ENCODE measurements at regions of chr5 and their contacts with region 1.

Region 1: DNA sequence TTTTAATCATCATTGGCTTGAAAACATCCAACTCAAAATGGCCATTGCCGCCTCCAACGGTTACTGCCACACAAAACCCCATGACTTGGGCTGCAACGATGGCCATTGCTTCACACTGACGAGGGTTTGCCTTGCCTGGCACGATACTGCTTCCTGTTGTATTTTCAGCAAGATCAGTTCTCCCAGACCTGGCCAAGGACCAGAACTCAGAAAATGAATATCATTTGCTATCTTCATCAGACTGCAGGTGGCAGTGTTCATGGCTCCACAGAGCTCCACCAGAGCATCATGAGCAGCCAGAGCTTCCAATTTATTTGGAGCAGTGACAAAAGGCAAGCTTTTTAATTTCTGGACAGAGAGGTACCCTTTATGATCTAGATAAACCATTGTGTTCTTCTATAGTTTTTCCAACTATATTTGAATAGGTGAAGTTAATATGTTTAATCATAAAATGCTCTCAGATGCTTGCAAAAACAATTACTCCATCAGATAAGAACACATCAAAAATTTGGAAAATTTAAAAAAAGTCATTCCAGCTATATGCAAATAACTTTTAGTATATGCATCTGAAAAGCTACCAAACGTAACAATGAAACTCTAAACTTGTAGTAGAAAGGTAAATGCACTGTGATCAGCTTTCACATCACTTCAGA is 10.4 kb downstream of the AMACR start:
- DNase-seq: no peak
- H3K4me3 Mint-ChIP-seq: no peak overlapping the region
- H3K27ac Mint-ChIP-seq: no peak overlapping the region
- H3K4me1 Mint-ChIP-seq: peaks cover 29% of the 10 kb centered on the region
- H3K27me3 Mint-ChIP-seq: no peaks in the 10 kb centered on the region

Region 2: GRCh38 chr5:33509036-33509435 is 488.4 kb before region 1 on chr5:
- intact Hi-C with region 1: no loop called
- DNase-seq: no peak
- H3K4me3 Mint-ChIP-seq: no peak overlapping the region
- H3K27ac Mint-ChIP-seq: no peak overlapping the region
- H3K4me1 Mint-ChIP-seq: no peaks in the 10 kb centered on the region
- H3K27me3 Mint-ChIP-seq: peaks cover 1% of the 10 kb centered on the region

Region 3: GRCh38 chr5:34464830-34465229 is 467.4 kb after region 1 on chr5:
- intact Hi-C with region 1: loop called (anchors 1 kb)
- DNase-seq: no peak
- H3K4me3 Mint-ChIP-seq: no peak overlapping the region
- H3K27ac Mint-ChIP-seq: no peak overlapping the region
- H3K4me1 Mint-ChIP-seq: peaks cover 4% of the 10 kb centered on the region
- H3K27me3 Mint-ChIP-seq: peaks cover 4% of the 10 kb centered on the region

Region 4: DNA sequence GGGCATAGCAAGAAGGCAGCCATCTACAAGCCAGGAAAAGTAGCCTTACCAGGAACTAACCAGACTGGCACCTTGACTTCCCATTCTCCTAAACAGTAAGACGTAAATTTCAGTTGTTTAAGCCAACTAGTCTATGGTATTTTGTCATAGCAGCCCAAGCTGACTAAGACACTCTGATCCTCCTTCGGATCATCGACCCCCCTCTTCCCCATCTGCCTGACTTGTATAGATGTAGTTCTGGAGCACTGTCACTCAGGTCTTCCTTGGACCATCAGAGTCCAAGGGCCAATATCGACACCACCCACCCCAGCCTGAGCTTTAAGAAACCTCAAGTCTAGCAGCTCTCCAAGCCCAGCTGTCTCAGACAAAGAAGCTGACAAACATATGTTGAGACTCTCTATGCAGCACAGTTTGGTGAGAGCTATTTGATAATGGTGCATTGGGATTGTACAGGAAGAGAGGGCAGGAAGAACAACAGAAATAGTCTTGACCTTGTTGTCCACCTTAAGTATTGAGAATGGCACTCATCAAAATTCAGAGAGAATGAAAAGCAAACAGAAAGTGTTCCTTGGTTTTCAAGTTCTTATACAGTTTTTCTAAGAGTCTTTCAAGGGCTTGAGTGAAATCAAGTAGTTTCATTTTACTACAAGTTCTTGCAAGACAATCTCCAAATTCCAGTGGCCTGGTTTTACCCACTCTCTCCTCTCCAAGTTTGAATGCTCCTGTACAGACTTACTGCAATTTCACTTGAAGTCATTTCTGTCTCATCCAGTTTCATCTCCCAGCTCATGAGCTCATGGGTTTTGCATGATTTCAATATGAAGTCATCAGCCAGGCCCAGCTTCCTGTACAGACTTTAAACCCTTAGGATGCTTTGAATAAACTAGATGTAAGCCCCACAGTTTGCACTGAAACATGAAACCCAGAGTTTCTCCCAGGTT is 536.4 kb after region 1 on chr5:
- intact Hi-C with region 1: no loop called
- DNase-seq: no peak
- H3K4me3 Mint-ChIP-seq: no peak overlapping the region
- H3K27ac Mint-ChIP-seq: peak overlapping the region; percentile 14
- H3K4me1 Mint-ChIP-seq: peaks cover 5% of the 10 kb centered on the region
- H3K27me3 Mint-ChIP-seq: peaks cover 6% of the 10 kb centered on the region

Measured in activated T-helper 1 cell treated with anti-CD3 and anti-CD28 coated beads, Interleukin-12 subunit alpha, Interleukin-12 subunit beta, Interleukin-2, Interleukin-4 antibody, amounts not matched to agents 30 ng/mL and 10 ng/mL and 1 ng/mL, durations not matched to agents 14 hours and 24 hours and 36 hours (primary cell).